Activated CD8-positive, alpha-beta memory T cell treated with anti-CD3 and anti-CD28 coated beads, Interleukin-2, amount 10 ng/mL, durations not matched to agents 7 days and 5 days (primary cell): ENCODE measurements at regions of chr3 and their contacts with region 1.

Region 1: GRCh38 chr3:122679085-122679881 is 1.4 kb upstream of the PARP14 start:
- DNase-seq: peak; percentile 92
- ATAC-seq: peak; percentile 69
- H3K4me3 Mint-ChIP-seq: peak overlapping the region; percentile 96
- H3K27ac Mint-ChIP-seq: peak overlapping the region; percentile 90
- H3K4me1 Mint-ChIP-seq: peaks cover 48% of the 10 kb centered on the region
- H3K27me3 Mint-ChIP-seq: no peaks in the 10 kb centered on the region

Region 2: GRCh38 chr3:121545574-121546455 is 1133.5 kb before region 1 on chr3 and contains the start of gene POLQ:
- CTCF ChIA-PET with region 1: interaction called, 13 read pairs
- DNase-seq: peak; percentile 95
- ATAC-seq: peak; percentile 95
- H3K4me3 Mint-ChIP-seq: peak within 1 kb of the TSS; percentile 95
- H3K27ac Mint-ChIP-seq: peak within 1 kb of the TSS; percentile 95
- H3K4me1 Mint-ChIP-seq: peaks cover 34% of the 10 kb centered on the region
- H3K27me3 Mint-ChIP-seq: no peaks in the 10 kb centered on the region
- total RNA-seq, gene POLQ: 34.3 to 55.8 TPM

Region 3: DNA sequence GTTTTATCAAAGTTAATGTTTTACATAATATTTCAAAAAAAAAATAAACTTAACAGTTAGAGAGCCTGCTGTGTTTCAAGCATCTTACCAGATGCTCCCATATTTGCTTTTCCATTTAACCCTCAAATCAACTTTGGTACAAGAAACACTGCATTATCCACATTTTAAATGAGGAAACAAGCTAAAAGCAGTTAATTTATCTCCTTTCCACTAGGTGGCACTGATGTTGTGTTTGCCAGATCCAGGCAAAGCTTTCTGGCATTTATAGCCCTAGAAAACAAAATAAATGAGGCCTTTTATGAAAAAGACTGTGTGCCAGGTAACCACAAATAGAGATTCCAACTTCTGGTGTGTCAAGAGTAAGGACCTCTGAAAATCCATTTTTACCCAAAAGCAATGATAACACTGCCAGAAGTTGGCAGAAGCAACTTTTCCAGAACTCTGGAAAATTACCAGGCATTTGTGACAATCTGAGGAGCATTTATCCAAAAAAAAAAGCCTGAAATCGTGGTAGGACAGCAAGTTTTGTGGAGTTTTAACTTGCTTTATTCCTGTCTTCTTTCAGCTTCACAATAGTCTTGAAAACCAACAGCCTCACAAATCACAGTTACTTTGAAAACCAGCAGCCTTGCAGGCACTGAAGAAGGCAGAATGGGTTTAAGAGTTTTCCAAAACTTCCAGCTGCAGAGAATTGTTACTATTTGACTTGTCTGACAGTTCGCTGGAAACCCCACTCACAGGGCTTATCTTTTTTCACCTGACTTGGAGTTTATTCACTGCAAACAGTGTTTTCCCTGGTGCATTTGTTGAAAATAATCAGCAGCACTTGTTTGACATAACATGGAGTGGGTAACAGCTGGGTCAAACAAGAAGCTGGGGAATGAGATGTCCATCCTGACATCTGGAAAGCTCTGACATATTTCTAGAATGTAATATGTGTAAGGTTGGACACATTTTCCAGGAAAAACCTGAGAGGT is 286.1 kb before region 1 on chr3:
- CTCF ChIA-PET with region 1: interaction called, 17 read pairs
- DNase-seq: no peak
- ATAC-seq: no peak
- H3K4me3 Mint-ChIP-seq: no peak overlapping the region
- H3K27ac Mint-ChIP-seq: no peak overlapping the region
- H3K4me1 Mint-ChIP-seq: peaks cover 37% of the 10 kb centered on the region
- H3K27me3 Mint-ChIP-seq: no peaks in the 10 kb centered on the region

Region 4: DNA sequence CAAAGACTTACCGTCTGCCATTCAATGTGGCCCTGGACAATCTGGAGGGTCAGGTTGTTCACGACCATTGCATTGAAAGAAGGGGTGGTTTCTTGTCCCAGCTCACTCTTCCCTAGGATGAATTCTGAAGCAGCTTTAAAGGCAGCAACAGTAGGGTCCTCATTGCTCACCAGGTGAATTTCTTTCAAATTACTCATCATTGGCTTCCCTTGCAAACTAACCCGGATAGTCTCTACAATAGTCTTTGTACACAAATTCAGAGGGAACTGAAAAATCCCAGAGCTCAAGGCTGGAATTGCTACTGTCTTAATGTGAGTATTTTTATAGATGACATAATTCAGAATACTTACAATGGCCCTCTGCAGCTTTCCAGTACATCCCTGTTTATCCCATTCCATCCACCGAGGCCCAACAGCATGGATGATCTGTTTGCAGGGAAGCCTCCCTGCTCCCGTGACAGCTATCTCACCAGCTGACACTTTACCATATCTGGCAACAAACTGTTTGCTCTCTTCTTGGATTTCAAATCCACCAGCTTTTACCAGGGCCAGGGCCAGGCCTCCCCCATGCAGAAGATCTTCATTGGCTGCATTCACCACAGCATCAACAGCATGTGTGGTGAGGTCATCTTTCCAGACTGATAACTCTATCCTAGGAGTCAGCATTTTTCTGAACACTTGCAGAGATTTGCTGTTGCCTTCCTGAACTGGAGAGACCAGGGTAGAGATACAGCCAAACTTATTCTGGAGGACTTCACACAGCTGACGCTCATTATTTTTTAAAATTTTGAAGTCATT is 123.8 kb before region 1 on chr3:
- CTCF ChIA-PET with region 1: interaction called, 145 read pairs
- DNase-seq: no peak
- ATAC-seq: no peak
- H3K4me3 Mint-ChIP-seq: no peak overlapping the region
- H3K27ac Mint-ChIP-seq: peak overlapping the region; percentile 47
- H3K4me1 Mint-ChIP-seq: peaks cover 40% of the 10 kb centered on the region
- H3K27me3 Mint-ChIP-seq: no peaks in the 10 kb centered on the region

Region 5: DNA sequence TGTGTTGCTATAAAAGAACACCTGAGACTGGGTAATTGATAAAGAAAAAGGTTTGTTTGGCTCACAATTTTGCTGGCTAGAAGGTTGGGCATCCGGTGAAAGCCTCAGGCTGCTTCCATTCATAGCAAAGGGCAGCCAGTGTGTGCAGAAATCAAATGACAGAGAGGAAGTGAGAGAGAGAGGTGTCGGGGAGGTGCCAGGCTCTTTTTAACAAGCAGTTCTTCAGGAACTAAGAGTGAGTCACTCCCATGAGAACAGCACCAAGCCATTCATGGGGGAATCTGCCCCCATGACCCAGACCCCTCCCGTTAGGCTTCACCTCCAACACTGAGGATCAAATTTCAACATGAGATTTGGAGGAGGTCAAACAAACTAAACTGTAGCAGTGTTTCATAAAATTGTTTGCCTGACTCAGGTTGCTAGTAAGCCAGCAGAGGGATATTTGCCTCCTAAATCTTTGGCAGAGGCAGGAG is 106.3 kb before region 1 on chr3:
- CTCF ChIA-PET with region 1: interaction called, 23 read pairs
- DNase-seq: peak; percentile 59
- ATAC-seq: peak; percentile 58
- H3K4me3 Mint-ChIP-seq: no peak overlapping the region
- H3K27ac Mint-ChIP-seq: peak overlapping the region; percentile 76
- H3K4me1 Mint-ChIP-seq: peaks cover 62% of the 10 kb centered on the region
- H3K27me3 Mint-ChIP-seq: no peaks in the 10 kb centered on the region

Region 6: DNA sequence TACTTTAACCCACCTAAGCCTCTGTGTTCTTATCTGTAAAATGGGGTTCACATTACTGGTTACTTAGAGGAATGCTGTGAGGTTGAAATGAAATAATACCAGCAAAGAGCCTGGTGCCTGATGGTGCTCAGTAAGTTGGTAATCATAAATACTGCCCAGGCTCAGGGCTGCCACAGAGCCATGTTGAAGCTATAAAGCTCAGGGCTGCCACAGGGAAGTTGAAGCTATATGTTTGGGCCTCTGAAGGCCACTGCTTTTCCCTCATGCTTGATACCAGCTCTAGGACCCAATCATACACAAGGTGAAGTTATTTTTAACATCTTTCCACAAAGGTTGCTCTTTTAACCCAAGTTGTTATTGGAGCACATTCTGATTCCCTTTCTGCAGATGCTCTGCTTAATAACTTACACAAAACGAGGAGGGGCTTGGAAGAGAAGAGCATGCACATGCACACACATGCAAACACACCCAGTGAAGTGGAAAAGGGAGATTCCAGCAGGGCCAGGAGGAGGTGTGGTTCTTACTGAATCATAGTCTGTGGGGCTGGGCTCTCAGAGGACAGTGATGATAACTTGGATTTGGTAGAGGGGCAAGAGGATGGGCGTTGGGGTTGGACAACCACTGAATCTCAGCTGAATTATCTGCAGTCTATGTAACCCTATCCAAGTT is 18.8 kb after region 1 on chr3:
- CTCF ChIA-PET with region 1: interaction called, 13 read pairs
- DNase-seq: no peak
- ATAC-seq: no peak
- H3K4me3 Mint-ChIP-seq: no peak overlapping the region
- H3K27ac Mint-ChIP-seq: peak overlapping the region; percentile 33
- H3K4me1 Mint-ChIP-seq: peaks cover 25% of the 10 kb centered on the region
- H3K27me3 Mint-ChIP-seq: no peaks in the 10 kb centered on the region

Region 7: DNA sequence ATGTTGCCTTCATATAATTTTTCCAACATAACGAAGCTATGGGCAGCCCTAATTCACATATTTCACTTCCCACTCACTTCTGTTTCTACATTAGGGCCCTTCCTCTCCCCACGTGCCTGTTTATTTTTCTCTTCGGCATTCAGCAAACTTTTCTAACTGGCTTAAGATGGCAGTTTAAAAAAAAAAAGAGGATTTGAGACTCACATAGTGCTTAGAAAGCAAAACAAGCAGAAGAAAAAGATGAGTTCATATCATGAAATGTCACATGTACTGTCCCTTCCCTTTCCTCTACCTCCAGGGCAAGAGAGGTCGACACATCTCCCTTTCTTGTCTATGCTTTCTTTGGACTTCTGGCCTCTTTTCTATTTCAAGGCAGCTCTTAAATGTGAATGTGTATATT is 146.2 kb after region 1 on chr3:
- CTCF ChIA-PET with region 1: no interaction called
- DNase-seq: no peak
- ATAC-seq: no peak
- H3K4me3 Mint-ChIP-seq: no peak overlapping the region
- H3K27ac Mint-ChIP-seq: no peak overlapping the region
- H3K4me1 Mint-ChIP-seq: no peaks in the 10 kb centered on the region
- H3K27me3 Mint-ChIP-seq: no peaks in the 10 kb centered on the region